MCF 10A (cell line): ENCODE measurements at regions of chr2 and their contacts with region 1.

Region 1: DNA sequence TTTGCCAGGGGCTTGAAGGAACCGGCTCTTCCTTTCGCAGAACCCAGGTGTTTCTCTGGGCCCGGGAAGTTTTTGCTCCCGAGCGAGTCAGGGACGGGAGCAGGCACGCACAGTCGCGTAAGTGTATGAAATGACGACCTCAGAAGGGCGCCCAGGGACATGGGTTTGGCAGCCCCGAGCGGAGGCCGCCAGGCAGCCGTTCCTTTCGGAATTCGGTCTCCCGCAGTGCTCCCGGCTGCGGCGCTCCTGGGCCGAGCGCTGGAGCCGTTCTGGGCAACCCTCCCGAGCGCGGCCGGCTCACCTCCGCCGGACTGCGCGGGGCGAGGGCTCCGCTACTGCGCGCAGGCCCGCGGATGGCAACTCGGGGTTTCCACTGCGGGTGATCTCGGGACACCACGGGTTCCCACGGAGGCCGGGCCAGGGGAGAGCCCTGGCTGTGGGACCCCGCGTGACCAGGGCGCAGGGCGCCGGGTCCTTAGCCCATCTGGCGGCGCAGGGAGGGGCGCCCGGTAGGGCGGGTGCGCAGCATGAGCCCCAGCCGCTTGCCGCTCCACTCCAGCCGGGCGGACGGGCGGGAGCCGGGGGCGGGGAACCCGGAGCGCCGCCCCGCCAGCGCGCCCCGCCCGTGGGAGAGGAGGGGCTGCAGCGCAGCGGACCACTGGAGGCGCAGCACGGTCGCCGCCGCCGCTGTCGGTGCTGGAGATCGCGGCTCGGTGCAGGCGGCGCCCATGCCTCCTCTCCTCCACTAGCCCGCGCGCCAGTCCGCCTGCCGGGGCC is at the start of gene OSBPL6:
- DNase-seq: peak; percentile 84
- H3K4me3 Mint-ChIP-seq: peak within 1 kb of the TSS; percentile 87
- H3K27ac Mint-ChIP-seq: no peak within 1 kb of the TSS
- H3K4me1 Mint-ChIP-seq: peaks cover 21% of the 10 kb centered on the region
- H3K27me3 Mint-ChIP-seq: no peaks in the 10 kb centered on the region
- CTCF ChIP-seq: peak; percentile 9
- total RNA-seq, gene OSBPL6: 26.2 and 43.1 TPM in 2 replicates

Region 2: GRCh38 chr2:177952151-177952550 is 241.9 kb before region 1 on chr2:
- CTCF ChIA-PET with region 1: no interaction called
- POLR2A ChIA-PET with region 1: no interaction called
- intact Hi-C with region 1: no loop called
- DNase-seq: no peak
- H3K4me3 Mint-ChIP-seq: no peak overlapping the region
- H3K27ac Mint-ChIP-seq: no peak overlapping the region
- H3K4me1 Mint-ChIP-seq: no peaks in the 10 kb centered on the region
- H3K27me3 Mint-ChIP-seq: no peaks in the 10 kb centered on the region
- CTCF ChIP-seq: no peak

Region 3: DNA sequence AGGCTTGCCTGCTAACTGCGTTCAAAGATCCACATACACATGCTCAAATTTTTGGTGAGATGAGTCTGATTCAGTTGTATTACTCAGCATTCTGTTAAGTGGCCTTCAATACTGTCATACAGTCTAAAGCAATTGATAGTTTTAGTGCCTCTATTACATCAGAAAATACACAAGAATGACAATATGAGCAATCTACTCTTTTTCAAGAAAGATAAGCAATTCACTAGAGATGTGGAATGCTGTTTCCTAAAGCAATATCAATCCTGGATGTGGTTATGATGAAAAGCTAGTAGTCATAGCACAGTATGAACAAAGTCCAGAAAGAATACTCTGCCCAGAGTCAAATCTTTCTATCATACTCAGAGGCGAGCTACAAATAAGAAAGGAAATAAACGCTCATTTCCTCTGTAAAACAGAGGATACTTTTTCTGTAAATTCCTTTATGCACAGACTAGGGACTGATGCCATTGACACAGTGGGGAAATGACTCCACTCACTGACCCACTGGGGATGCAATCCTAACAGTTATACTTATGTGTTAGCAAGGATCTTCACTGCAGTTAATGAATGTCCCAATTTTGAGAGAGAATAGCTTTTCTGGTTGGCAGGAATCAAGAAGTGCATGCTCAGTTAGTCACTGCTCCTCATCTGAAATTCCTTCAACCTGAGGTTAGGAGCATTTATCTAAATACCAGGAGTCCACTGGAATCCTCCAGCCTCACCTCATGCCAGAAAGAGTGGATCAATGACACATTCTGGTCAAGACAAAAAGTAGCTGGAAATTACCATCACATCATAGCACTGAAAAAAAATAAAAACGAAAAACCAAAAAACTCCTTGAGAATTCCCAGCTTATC is 204.8 kb before region 1 on chr2:
- CTCF ChIA-PET with region 1: no interaction called
- POLR2A ChIA-PET with region 1: no interaction called
- intact Hi-C with region 1: no loop called
- DNase-seq: no peak
- H3K4me3 Mint-ChIP-seq: no peak overlapping the region
- H3K27ac Mint-ChIP-seq: no peak overlapping the region
- H3K4me1 Mint-ChIP-seq: no peaks in the 10 kb centered on the region
- H3K27me3 Mint-ChIP-seq: peaks cover 26% of the 10 kb centered on the region
- CTCF ChIP-seq: no peak

Region 4: GRCh38 chr2:178208817-178209216 is 14.8 kb after region 1 on chr2:
- CTCF ChIA-PET with region 1: interaction called, 5 read pairs
- POLR2A ChIA-PET with region 1: interaction called, 25 read pairs
- intact Hi-C with region 1: no loop called
- DNase-seq: no peak
- H3K4me3 Mint-ChIP-seq: no peak overlapping the region
- H3K27ac Mint-ChIP-seq: no peak overlapping the region
- H3K4me1 Mint-ChIP-seq: peaks cover 25% of the 10 kb centered on the region
- H3K27me3 Mint-ChIP-seq: no peaks in the 10 kb centered on the region
- CTCF ChIP-seq: peak; percentile 18

Region 5: GRCh38 chr2:178271629-178272333 is 77.8 kb after region 1 on chr2:
- CTCF ChIA-PET with region 1: interaction called, 5 read pairs
- POLR2A ChIA-PET with region 1: interaction called, 25 read pairs
- intact Hi-C with region 1: no loop called
- DNase-seq: peak; percentile 91
- H3K4me3 Mint-ChIP-seq: peak overlapping the region; percentile 35
- H3K27ac Mint-ChIP-seq: peak overlapping the region; percentile 77
- H3K4me1 Mint-ChIP-seq: peaks cover 32% of the 10 kb centered on the region
- H3K27me3 Mint-ChIP-seq: no peaks in the 10 kb centered on the region
- CTCF ChIP-seq: no peak

Region 6: GRCh38 chr2:178298785-178299212 is 104.8 kb after region 1 on chr2:
- CTCF ChIA-PET with region 1: interaction called, 3 read pairs
- POLR2A ChIA-PET with region 1: interaction called, 77 read pairs
- intact Hi-C with region 1: loop called (anchors 5 kb)
- DNase-seq: peak; percentile 94
- H3K4me3 Mint-ChIP-seq: peak overlapping the region; percentile 62
- H3K27ac Mint-ChIP-seq: peak overlapping the region; percentile 89
- H3K4me1 Mint-ChIP-seq: peaks cover 22% of the 10 kb centered on the region
- H3K27me3 Mint-ChIP-seq: no peaks in the 10 kb centered on the region
- CTCF ChIP-seq: no peak

Region 7: DNA sequence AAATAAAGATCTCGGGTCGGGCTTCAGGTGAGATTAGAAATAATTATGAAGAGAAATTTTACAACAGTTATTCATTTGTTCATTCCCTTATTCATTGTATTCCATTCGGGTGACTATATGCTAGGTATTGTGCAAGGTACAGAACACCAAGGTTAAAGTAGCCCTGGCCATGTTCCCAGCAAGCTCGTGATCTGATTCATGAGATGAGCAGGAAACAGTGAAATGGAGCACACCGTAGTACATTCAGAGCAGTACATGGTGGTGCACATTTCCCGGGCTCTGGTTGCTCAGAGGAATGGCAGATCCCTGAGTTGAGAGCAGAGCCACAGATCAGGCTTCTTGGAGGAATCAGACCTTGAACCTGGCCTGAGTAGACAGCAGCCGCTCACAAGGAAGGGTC is 169.2 kb after region 1 on chr2:
- CTCF ChIA-PET with region 1: no interaction called
- POLR2A ChIA-PET with region 1: interaction called, 12 read pairs
- intact Hi-C with region 1: no loop called
- DNase-seq: peak; percentile 92
- H3K4me3 Mint-ChIP-seq: peak overlapping the region; percentile 46
- H3K27ac Mint-ChIP-seq: peak overlapping the region; percentile 52
- H3K4me1 Mint-ChIP-seq: peaks cover 18% of the 10 kb centered on the region
- H3K27me3 Mint-ChIP-seq: no peaks in the 10 kb centered on the region
- CTCF ChIP-seq: no peak